Activated T-helper 1 cell treated with anti-CD3 and anti-CD28 coated beads, Interleukin-12 subunit alpha, Interleukin-12 subunit beta, Interleukin-2, Interleukin-4 antibody, amounts not matched to agents 30 ng/mL and 10 ng/mL and 1 ng/mL, durations not matched to agents 14 hours and 24 hours and 36 hours (primary cell): ENCODE measurements at regions of chr1 and their contacts with region 1.

Region 1: GRCh38 chr1:26582836-26583460 is 53.4 kb downstream of the RPS6KA1 start:
- DNase-seq: peak; percentile 37
- H3K4me3 Mint-ChIP-seq: peak overlapping the region; percentile 49
- H3K27ac Mint-ChIP-seq: peak overlapping the region; percentile 93
- H3K4me1 Mint-ChIP-seq: peaks cover 55% of the 10 kb centered on the region
- H3K27me3 Mint-ChIP-seq: no peaks in the 10 kb centered on the region

Region 2: DNA sequence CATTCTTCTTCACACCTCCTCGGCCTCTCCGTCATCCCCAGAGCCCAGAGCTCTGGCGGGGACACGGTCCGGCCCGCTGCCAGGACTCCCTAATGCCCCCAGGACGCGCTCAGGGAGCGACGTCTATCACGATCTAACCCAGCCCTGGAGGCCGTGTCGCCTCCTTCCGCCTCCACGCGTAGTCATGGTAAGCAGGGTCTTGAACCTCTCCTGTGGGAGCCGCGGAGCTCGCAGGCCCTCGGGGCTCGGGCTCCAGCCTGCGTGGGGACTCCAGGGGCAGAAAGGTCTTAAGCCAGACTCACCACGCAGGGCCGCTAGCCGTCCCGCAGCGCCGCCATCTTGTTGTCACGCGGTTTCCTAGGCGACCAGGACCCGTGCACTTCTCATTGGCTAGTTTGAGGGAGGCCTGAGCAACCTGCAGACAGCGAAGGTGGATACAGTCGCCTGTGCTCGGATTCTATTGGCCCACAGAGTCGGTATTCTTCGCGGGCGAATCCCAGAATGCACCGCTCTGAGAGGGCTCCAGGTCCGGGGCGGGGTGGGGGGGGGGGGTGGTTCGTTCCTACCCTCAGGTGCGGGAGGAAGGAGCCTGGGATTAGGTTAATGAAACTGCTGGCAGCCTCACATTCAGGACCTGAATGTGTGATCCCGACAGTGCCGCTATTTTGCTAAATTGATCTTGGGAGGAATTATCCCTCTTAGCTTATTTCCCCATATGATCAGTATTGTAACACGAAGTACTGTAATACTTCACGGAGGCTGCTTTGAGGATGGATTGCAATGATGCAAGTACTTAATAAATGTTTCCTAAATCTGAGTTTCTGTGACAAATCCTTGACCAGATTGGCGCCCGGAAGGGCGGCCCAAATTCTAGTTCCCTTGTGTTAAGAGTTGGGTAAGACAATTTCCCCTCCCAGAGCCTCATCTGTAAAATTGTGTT is 276.4 kb before region 1 on chr1 and contains the start of gene UBXN11:
- intact Hi-C with region 1: loop called (anchors 5 kb)
- DNase-seq: peak; percentile 92
- H3K4me3 Mint-ChIP-seq: peak within 1 kb of the TSS; percentile 99
- H3K27ac Mint-ChIP-seq: peak within 1 kb of the TSS; percentile 95
- H3K4me1 Mint-ChIP-seq: peaks cover 41% of the 10 kb centered on the region
- H3K27me3 Mint-ChIP-seq: no peaks in the 10 kb centered on the region
- total RNA-seq, gene UBXN11: 14.8 and 22.1 TPM in 2 replicates

Region 3: GRCh38 chr1:26541816-26542711 is 40.9 kb before region 1 on chr1:
- intact Hi-C with region 1: loop called (anchors 1 kb)
- DNase-seq: peak; percentile 73
- H3K4me3 Mint-ChIP-seq: peak overlapping the region; percentile 76
- H3K27ac Mint-ChIP-seq: peak overlapping the region; percentile 95
- H3K4me1 Mint-ChIP-seq: peaks cover 85% of the 10 kb centered on the region
- H3K27me3 Mint-ChIP-seq: no peaks in the 10 kb centered on the region

Region 4: DNA sequence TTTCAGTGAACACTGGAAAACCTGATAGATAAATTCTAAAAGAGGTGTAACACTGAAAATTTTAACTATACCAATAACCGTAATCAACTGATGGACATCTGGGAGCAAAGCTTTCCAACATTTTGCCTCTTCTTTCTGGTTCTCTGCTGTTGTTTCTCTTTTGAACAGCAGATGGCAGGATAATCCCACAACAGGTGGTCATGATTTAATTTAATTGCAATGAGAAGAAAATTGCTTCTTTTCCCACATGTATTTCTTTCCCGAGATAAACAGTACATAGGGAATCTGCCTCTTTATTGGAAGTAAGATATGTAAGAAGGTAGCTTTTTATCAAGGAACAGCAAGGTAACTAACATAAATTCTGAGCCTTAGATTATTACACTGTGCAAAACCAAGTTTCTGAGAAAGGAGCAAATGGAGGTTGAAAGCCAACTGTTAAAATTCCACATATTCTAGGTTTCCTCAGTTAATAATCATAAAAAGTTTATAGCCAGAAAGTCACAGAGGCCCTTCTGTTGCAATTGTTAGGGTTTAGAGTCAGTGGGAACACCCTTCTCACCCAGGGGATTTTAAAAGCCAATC is 19.5 kb after region 1 on chr1:
- intact Hi-C with region 1: loop called (anchors 1 kb)
- DNase-seq: peak; percentile 36
- H3K4me3 Mint-ChIP-seq: no peak overlapping the region
- H3K27ac Mint-ChIP-seq: no peak overlapping the region
- H3K4me1 Mint-ChIP-seq: peaks cover 15% of the 10 kb centered on the region
- H3K27me3 Mint-ChIP-seq: peaks cover 4% of the 10 kb centered on the region

Region 5: DNA sequence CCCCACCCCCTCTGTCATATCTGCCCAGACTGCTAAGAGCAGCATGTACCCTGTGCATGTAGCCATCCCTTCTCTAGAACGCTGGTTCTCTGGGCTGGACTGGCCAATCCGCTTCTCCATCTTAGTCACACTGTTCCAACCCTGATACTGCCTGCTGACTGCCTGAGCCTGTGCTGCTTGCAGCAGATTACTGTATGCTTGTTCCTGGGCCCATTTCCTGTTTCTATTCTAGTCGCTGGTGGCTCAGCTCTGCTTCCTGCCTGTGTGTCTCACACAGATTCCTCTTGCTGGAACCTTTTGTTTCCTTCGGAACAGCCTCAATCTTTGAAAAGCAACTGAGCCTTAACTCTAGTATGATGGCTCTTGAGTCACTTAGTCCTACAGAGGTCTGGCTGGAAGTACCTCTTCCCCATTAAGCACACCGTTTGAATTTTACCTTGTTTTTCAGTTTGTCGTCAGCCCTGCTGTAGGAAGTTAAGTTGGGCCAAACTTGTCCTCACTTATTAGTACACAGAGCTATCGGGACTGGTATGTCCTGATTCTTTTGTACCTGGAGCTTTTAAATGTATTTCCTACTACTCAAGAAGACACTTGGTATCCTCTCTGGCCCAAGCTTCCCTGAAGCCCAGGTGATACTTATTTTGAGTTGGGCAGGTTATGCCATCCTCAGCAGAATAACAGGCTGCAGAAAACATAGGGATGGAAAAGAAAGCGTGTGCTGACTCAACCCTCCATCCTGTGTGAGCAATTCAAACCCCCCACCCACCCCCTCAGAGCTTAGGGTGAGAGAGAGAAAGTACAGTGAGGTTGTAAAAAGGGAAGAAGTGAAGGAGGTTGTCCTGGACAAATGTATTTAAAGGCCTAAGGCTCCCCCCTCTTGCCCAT is 161.4 kb after region 1 on chr1:
- intact Hi-C with region 1: loop called (anchors 1 kb)
- DNase-seq: peak; percentile 84
- H3K4me3 Mint-ChIP-seq: peak overlapping the region; percentile 73
- H3K27ac Mint-ChIP-seq: peak overlapping the region; percentile 93
- H3K4me1 Mint-ChIP-seq: peaks cover 77% of the 10 kb centered on the region
- H3K27me3 Mint-ChIP-seq: no peaks in the 10 kb centered on the region

Region 6: GRCh38 chr1:26864610-26865527 is 281.9 kb after region 1 on chr1:
- intact Hi-C with region 1: loop called (anchors 5 kb)
- DNase-seq: peak; percentile 96
- H3K4me3 Mint-ChIP-seq: peak overlapping the region; percentile 98
- H3K27ac Mint-ChIP-seq: peak overlapping the region; percentile 98
- H3K4me1 Mint-ChIP-seq: peaks cover 32% of the 10 kb centered on the region
- H3K27me3 Mint-ChIP-seq: no peaks in the 10 kb centered on the region